ENCODE measurements at regions of chr17 and their contacts with region 1.

Region 1: DNA sequence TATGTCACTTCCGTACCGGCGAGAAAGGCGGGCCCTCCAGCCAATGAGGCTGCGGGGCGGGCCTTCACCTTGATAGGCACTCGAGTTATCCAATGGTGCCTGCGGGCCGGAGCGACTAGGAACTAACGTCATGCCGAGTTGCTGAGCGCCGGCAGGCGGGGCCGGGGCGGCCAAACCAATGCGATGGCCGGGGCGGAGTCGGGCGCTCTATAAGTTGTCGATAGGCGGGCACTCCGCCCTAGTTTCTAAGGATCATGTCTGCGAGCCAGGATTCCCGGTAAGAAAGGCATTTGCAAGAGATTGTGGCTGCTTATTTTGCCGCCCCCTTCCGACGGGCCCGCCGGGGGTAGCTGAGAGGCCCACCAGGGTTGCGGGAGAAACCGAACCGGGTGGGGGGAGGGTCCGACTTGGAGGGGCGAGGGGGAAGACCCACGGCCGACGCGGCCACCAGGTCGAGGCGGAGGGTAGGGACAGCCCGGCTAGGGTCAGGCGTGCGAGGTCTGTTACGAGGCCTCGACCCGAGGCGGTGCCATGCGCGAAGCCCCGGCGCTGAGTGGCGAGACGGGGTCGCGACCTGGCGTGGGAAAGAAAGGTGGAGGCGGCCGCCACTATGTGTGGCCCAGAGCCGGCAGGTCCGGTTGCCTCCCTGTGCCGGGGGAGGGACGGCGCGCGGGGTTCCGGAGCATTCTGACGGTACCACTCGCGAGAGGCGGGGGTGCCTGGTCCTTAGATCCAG is 6.7 kb upstream of the CD68 start:
- DNase-seq: peak; percentile 99 to 100 (median 100)
- ATAC-seq: peak; percentile 91
- H3K4me3 ChIP-seq: peak overlapping the region; percentile 91
- H3K4me3 Mint-ChIP-seq: peak overlapping the region; percentile 90 to 100 (median 98)
- H3K27ac ChIP-seq: peak overlapping the region; percentile 96
- H3K27ac Mint-ChIP-seq: peak overlapping the region; percentile 94 to 99 (median 98)
- H3K4me1 ChIP-seq: peaks cover 21 to 31% of the 10 kb centered on the region in 2 donors
- H3K4me1 Mint-ChIP-seq: peaks cover 9 to 62% (median 48%) of the 10 kb centered on the region in 7 donors
- H3K27me3 ChIP-seq: no peaks in the 10 kb centered on the region
- H3K27me3 Mint-ChIP-seq: peaks cover 0 to 5% (median 0%) of the 10 kb centered on the region in 5 donors

Region 2: GRCh38 chr17:7021993-7022778 is 550.6 kb before region 1 on chr17:
- CTCF ChIA-PET with region 1: no interaction called
- POLR2A ChIA-PET with region 1: no interaction called
- intact Hi-C with region 1: loop called in 1 of 2 experiments (anchors 10 kb)
- DNase-seq: peak; percentile 52 to 86 (median 71)
- ATAC-seq: peak; percentile 81
- H3K4me3 ChIP-seq: peak overlapping the region; percentile 44
- H3K4me3 Mint-ChIP-seq: peak overlapping the region; percentile 58 to 84 (median 78)
- H3K27ac ChIP-seq: peak overlapping the region; percentile 48
- H3K27ac Mint-ChIP-seq: peak overlapping the region in 7 of 9 donors; percentile 17 to 92 (median 78)
- H3K4me1 ChIP-seq: peaks cover 21 to 30% of the 10 kb centered on the region in 2 donors
- H3K4me1 Mint-ChIP-seq: peaks cover 17 to 61% (median 30%) of the 10 kb centered on the region in 7 donors
- H3K27me3 ChIP-seq: no peaks in the 10 kb centered on the region
- H3K27me3 Mint-ChIP-seq: no peaks in the 10 kb centered on the region

Region 3: DNA sequence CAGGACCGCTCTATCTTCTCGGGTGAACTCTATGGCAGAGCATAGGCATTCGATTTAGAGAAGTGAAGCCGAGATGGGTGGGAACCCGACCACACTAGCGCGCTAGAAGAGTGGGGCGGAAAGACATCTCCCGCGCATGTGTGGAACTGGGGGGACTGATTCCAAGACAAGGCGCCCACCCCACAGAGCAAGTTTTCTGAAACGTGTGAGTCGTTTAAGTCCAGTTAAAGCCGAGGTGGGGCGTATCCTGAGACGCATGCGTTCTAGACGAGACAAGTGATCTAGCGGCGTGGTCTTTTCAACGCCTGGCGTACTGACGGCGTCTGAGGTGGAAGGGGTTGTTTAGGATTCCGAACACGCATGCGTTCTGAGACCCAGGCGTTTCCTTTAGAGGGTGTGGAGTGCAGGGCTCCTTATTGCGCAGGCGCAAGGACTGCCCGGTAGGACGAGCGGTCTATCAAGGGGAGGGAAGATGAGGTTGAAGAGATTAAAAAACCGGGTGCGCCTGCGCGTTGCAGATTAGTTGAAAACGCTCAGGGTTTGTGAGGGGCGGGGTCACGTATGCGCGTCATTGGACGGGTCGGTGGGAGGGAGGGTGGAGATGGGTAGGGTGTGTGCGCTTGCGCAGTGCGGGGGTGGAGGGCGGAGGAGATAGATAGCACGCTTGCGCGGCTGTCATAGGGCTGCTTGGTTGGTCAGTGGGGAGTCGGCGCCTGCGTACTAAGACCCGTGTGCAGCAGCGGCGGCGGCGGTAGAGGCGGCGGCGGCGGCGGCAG is 265.7 kb before region 1 on chr17 and contains the start of gene EIF5A:
- CTCF ChIA-PET with region 1: no interaction called
- POLR2A ChIA-PET with region 1: no interaction called
- intact Hi-C with region 1: loop called (anchors 1 to 2 kb)
- DNase-seq: peak; percentile 99 to 100 (median 100)
- ATAC-seq: peak; percentile 79
- H3K4me3 ChIP-seq: peak within 1 kb of the TSS; percentile 78
- H3K4me3 Mint-ChIP-seq: peak within 1 kb of the TSS; percentile 90 to 99 (median 95)
- H3K27ac ChIP-seq: peak within 1 kb of the TSS; percentile 100
- H3K27ac Mint-ChIP-seq: peak within 1 kb of the TSS; percentile 98 to 100 (median 99)
- H3K4me1 ChIP-seq: peaks cover 19 to 20% of the 10 kb centered on the region in 2 donors
- H3K4me1 Mint-ChIP-seq: peaks cover 28 to 44% (median 35%) of the 10 kb centered on the region in 7 donors
- H3K27me3 ChIP-seq: no peaks in the 10 kb centered on the region
- H3K27me3 Mint-ChIP-seq: peaks cover 0 to 9% (median 0%) of the 10 kb centered on the region in 5 donors
- total RNA-seq, gene EIF5A: 237 to 666 (median 453) TPM

Region 4: GRCh38 chr17:7454980-7455379 is 117.8 kb before region 1 on chr17:
- CTCF ChIA-PET with region 1: no interaction called
- POLR2A ChIA-PET with region 1: interaction called, 4 read pairs
- intact Hi-C with region 1: loop called (anchors 1 kb)
- DNase-seq: no peak
- ATAC-seq: peak; percentile 26
- H3K4me3 ChIP-seq: peak overlapping the region; percentile 92
- H3K4me3 Mint-ChIP-seq: peak overlapping the region; percentile 89 to 96 (median 95)
- H3K27ac ChIP-seq: peak overlapping the region; percentile 77
- H3K27ac Mint-ChIP-seq: peak overlapping the region; percentile 86 to 97 (median 94)
- H3K4me1 ChIP-seq: peaks cover 17 to 20% of the 10 kb centered on the region in 2 donors
- H3K4me1 Mint-ChIP-seq: peaks cover 13 to 44% (median 36%) of the 10 kb centered on the region in 7 donors
- H3K27me3 ChIP-seq: no peaks in the 10 kb centered on the region
- H3K27me3 Mint-ChIP-seq: no peaks in the 10 kb centered on the region

Region 5: GRCh38 chr17:7496470-7497183 is 76.1 kb before region 1 on chr17:
- CTCF ChIA-PET with region 1: no interaction called
- POLR2A ChIA-PET with region 1: no interaction called
- intact Hi-C with region 1: no loop called
- DNase-seq: no peak
- ATAC-seq: no peak
- H3K4me3 ChIP-seq: no peak overlapping the region
- H3K4me3 Mint-ChIP-seq: no peak overlapping the region
- H3K27ac ChIP-seq: no peak overlapping the region
- H3K27ac Mint-ChIP-seq: peak overlapping the region in 4 of 9 donors; percentile 47 to 72 (median 61)
- H3K4me1 ChIP-seq: peaks cover 0 to 2% of the 10 kb centered on the region in 2 donors
- H3K4me1 Mint-ChIP-seq: peaks cover 15 to 33% (median 23%) of the 10 kb centered on the region in 7 donors
- H3K27me3 ChIP-seq: no peaks in the 10 kb centered on the region
- H3K27me3 Mint-ChIP-seq: no peaks in the 10 kb centered on the region

Region 6: GRCh38 chr17:7614422-7615264 is 41.9 kb after region 1 on chr17 and contains the start of gene FXR2:
- CTCF ChIA-PET with region 1: no interaction called
- POLR2A ChIA-PET with region 1: interaction called, 6 read pairs
- intact Hi-C with region 1: loop called (anchors 1 to 5 kb)
- DNase-seq: peak; percentile 96 to 100 (median 99)
- ATAC-seq: peak; percentile 93
- H3K4me3 ChIP-seq: peak within 1 kb of the TSS; percentile 86
- H3K4me3 Mint-ChIP-seq: peak within 1 kb of the TSS; percentile 85 to 97 (median 92)
- H3K27ac ChIP-seq: peak within 1 kb of the TSS; percentile 81
- H3K27ac Mint-ChIP-seq: peak within 1 kb of the TSS; percentile 89 to 99 (median 97)
- H3K4me1 ChIP-seq: peaks cover 16 to 27% of the 10 kb centered on the region in 2 donors
- H3K4me1 Mint-ChIP-seq: peaks cover 29 to 47% (median 40%) of the 10 kb centered on the region in 7 donors
- H3K27me3 ChIP-seq: no peaks in the 10 kb centered on the region
- H3K27me3 Mint-ChIP-seq: peaks cover 0 to 6% (median 0%) of the 10 kb centered on the region in 5 donors
- total RNA-seq, gene FXR2: 24.6 to 46.9 (median 34.0) TPM

Region 7: DNA sequence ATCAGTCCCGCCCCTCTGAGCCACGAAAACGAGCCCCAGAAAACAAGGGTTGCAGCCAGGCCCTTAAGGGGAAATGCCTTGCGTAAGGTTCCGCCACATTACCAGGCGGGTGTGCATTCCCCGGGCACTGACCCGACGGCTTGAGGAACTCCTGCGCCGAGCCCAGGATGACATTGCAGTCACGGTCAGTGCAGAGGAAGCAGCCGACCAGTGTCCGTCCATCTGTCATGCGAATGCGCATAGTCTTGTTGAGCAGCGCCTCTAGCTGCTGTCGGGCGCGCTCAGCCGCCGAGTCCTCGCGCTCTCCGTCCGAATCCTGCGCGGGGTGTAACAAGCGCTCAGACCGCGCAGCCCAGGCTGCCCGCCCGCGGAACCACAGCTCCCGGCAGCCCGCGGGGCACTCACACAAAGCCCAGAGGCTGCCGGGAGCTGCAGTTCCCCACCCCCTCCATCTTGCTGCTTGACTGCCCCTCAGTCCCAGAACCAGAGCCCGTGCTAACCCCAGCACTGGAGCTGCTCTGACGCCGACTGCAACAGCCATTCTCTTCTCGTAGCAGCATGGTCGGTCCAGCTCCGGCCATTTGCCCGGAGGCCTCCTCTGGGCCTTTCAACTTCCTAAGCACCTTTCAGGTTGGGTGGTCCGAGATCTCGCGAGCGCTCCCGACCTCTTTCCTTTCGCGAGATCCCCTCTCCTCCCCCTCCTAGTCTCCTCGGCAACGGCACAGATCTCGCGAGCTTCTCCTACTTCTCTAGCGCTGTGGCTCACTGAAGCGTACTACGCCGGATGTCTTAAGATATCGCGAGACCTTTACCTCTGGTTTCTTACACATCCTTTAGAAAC is 284.3 kb after region 1 on chr17 and contains the start of gene NAA38:
- CTCF ChIA-PET with region 1: no interaction called
- POLR2A ChIA-PET with region 1: no interaction called
- intact Hi-C with region 1: loop called in 1 of 2 experiments (anchors 5 kb)
- DNase-seq: peak; percentile 81 to 99 (median 97)
- ATAC-seq: peak; percentile 87
- H3K4me3 ChIP-seq: peak within 1 kb of the TSS; percentile 70
- H3K4me3 Mint-ChIP-seq: no peak within 1 kb of the TSS
- H3K27ac ChIP-seq: peak within 1 kb of the TSS; percentile 83
- H3K27ac Mint-ChIP-seq: no peak within 1 kb of the TSS
- H3K4me1 ChIP-seq: peaks cover 25 to 26% of the 10 kb centered on the region in 2 donors
- H3K4me1 Mint-ChIP-seq: peaks cover 0 to 16% (median 5%) of the 10 kb centered on the region in 7 donors
- H3K27me3 ChIP-seq: no peaks in the 10 kb centered on the region
- H3K27me3 Mint-ChIP-seq: no peaks in the 10 kb centered on the region
- total RNA-seq, gene NAA38: 22.1 to 63.8 (median 24.9) TPM

Region 8: GRCh38 chr17:7867881-7868329 is 295.1 kb after region 1 on chr17:
- CTCF ChIA-PET with region 1: no interaction called
- POLR2A ChIA-PET with region 1: no interaction called
- intact Hi-C with region 1: no loop called
- DNase-seq: no peak
- ATAC-seq: peak; percentile 79
- H3K4me3 ChIP-seq: peak overlapping the region; percentile 2
- H3K4me3 Mint-ChIP-seq: peak overlapping the region; percentile 46 to 83 (median 70)
- H3K27ac ChIP-seq: peak overlapping the region; percentile 49
- H3K27ac Mint-ChIP-seq: peak overlapping the region; percentile 53 to 92 (median 87)
- H3K4me1 ChIP-seq: peaks cover 16 to 20% of the 10 kb centered on the region in 2 donors
- H3K4me1 Mint-ChIP-seq: peaks cover 23 to 46% (median 43%) of the 10 kb centered on the region in 7 donors
- H3K27me3 ChIP-seq: no peaks in the 10 kb centered on the region
- H3K27me3 Mint-ChIP-seq: no peaks in the 10 kb centered on the region

Region 9: GRCh38 chr17:8189711-8190477 is 617.1 kb after region 1 on chr17 and contains the start of gene BORCS6:
- CTCF ChIA-PET with region 1: no interaction called
- POLR2A ChIA-PET with region 1: no interaction called
- intact Hi-C with region 1: loop called in 1 of 2 experiments (anchors 1 kb)
- DNase-seq: peak; percentile 76 to 97 (median 94)
- ATAC-seq: peak; percentile 81
- H3K4me3 ChIP-seq: peak within 1 kb of the TSS; percentile 91
- H3K4me3 Mint-ChIP-seq: peak within 1 kb of the TSS in 2 of 10 donors; percentile 15 to 49
- H3K27ac ChIP-seq: peak within 1 kb of the TSS; percentile 87
- H3K27ac Mint-ChIP-seq: peak within 1 kb of the TSS in 7 of 9 donors; percentile 46 to 94 (median 88)
- H3K4me1 ChIP-seq: peaks cover 33 to 38% of the 10 kb centered on the region in 2 donors
- H3K4me1 Mint-ChIP-seq: peaks cover 8 to 13% (median 13%) of the 10 kb centered on the region in 7 donors
- H3K27me3 ChIP-seq: no peaks in the 10 kb centered on the region
- H3K27me3 Mint-ChIP-seq: no peaks in the 10 kb centered on the region
- total RNA-seq, gene BORCS6: 5.4 to 16.1 (median 13.4) TPM